ENCODE measurements at regions of chr1 and their contacts with region 1.

Region 1: GRCh38 chr1:188700116-188700515 is 1777.5 kb downstream of the BRINP3 start:
- DNase-seq: no peak
- ATAC-seq: no peak

Region 2: GRCh38 chr1:188735567-188735966 is 35.5 kb after region 1 on chr1:
- intact Hi-C with region 1: loop called (anchors 1 kb)
- DNase-seq: no peak
- ATAC-seq: no peak

Measured in sciatic nerve (tissue), 2 donors.